Caco-2 (cell line): ENCODE measurements at regions of chr15 and their contacts with region 1.

Region 1: GRCh38 chr15:43285609-43286037 is 18.9 kb upstream of the TGM5 start:
- DNase-seq: peak; percentile 46 to 71
- H3K4me3 ChIP-seq: no peak overlapping the region
- H3K4me3 Mint-ChIP-seq: no peak overlapping the region
- H3K27ac Mint-ChIP-seq: no peak overlapping the region
- H3K4me1 ChIP-seq: no peaks in the 10 kb centered on the region
- H3K4me1 Mint-ChIP-seq: peaks cover 4% of the 10 kb centered on the region
- H3K27me3 ChIP-seq: no peaks in the 10 kb centered on the region
- H3K27me3 Mint-ChIP-seq: peaks cover 10% of the 10 kb centered on the region
- CTCF ChIP-seq: peak; percentile 64 to 79

Region 2: GRCh38 chr15:42704492-42704926 is 581.1 kb before region 1 on chr15:
- CTCF ChIA-PET with region 1: no interaction called
- POLR2A ChIA-PET with region 1: no interaction called
- intact Hi-C with region 1: loop called (anchors 5 kb)
- DNase-seq: peak; percentile 68 to 74
- H3K4me3 ChIP-seq: no peak overlapping the region
- H3K4me3 Mint-ChIP-seq: no peak overlapping the region
- H3K27ac Mint-ChIP-seq: no peak overlapping the region
- H3K4me1 ChIP-seq: no peaks in the 10 kb centered on the region
- H3K4me1 Mint-ChIP-seq: no peaks in the 10 kb centered on the region
- H3K27me3 ChIP-seq: no peaks in the 10 kb centered on the region
- H3K27me3 Mint-ChIP-seq: peaks cover 3% of the 10 kb centered on the region
- CTCF ChIP-seq: peak; percentile 81 to 89

Region 3: GRCh38 chr15:43127752-43128151 is 157.9 kb before region 1 on chr15:
- CTCF ChIA-PET with region 1: no interaction called
- POLR2A ChIA-PET with region 1: no interaction called
- intact Hi-C with region 1: no loop called
- DNase-seq: peak; percentile 40 to 58
- H3K4me3 ChIP-seq: no peak overlapping the region
- H3K4me3 Mint-ChIP-seq: peak overlapping the region; percentile 29
- H3K27ac Mint-ChIP-seq: peak overlapping the region; percentile 12
- H3K4me1 ChIP-seq: peaks cover 27% of the 10 kb centered on the region
- H3K4me1 Mint-ChIP-seq: peaks cover 29% of the 10 kb centered on the region
- H3K27me3 ChIP-seq: no peaks in the 10 kb centered on the region; the same call in 1 of the 2 replicates
- H3K27me3 Mint-ChIP-seq: no peaks in the 10 kb centered on the region
- CTCF ChIP-seq: no peak

Region 4: GRCh38 chr15:43185157-43186017 is 100.2 kb before region 1 on chr15 and contains the start of gene CCNDBP1:
- CTCF ChIA-PET with region 1: no interaction called
- POLR2A ChIA-PET with region 1: interaction called, 3 read pairs
- intact Hi-C with region 1: loop called (anchors 1 kb)
- DNase-seq: peak; percentile 96 to 97
- H3K4me3 ChIP-seq: peak within 1 kb of the TSS; percentile 82
- H3K4me3 Mint-ChIP-seq: peak within 1 kb of the TSS; percentile 93
- H3K27ac Mint-ChIP-seq: peak within 1 kb of the TSS; percentile 79
- H3K4me1 ChIP-seq: peaks cover 12% of the 10 kb centered on the region
- H3K4me1 Mint-ChIP-seq: peaks cover 4% of the 10 kb centered on the region
- H3K27me3 ChIP-seq: no peaks in the 10 kb centered on the region
- H3K27me3 Mint-ChIP-seq: no peaks in the 10 kb centered on the region
- CTCF ChIP-seq: peak; percentile 42 to 55
- total RNA-seq, gene CCNDBP1: 21.7 and 23.1 TPM in 2 replicates

Region 5: DNA sequence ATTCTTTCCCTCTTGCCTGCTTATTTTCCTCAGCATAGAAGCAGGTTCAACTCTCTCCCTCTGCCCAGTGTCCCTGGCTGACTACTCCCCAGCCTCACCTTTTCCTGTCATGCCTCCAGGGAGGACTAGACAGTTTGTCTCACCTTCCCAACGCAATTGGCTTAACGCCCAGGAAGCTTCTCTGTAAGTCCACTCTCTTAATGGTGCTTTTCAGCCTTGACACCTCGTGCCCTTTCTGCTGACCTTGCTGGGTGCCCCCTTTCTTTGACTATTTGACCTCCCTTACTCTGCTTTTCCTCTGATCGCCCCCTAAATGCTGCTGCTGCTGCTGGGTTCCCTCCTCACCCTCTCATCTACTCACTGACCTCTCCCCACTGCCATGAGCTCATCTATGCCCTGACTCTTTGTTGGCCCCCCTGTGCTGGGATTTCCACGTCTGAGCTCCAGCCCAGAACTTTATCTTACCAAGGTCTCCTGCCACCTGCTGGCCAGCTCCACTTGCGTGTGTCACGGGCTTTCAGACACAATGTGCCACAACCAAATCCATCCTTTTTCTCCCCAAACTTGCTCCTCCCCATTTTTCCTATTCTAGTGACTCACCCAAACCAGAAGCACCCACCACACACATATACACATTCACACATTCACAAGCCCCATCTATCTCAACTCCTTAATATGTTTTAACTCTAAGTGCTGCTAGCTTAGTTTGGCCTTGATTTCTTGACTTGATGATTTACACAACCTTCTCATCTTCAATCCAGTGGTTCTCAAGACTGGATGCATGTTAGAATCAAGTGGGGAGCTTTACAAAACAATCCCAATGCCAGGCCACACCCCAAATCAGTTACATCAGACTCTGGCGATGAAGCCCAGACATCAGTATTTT is 81.4 kb before region 1 on chr15:
- CTCF ChIA-PET with region 1: interaction called, 19 read pairs
- POLR2A ChIA-PET with region 1: no interaction called
- intact Hi-C with region 1: loop called (anchors 5 kb)
- DNase-seq: peak; percentile 59 to 61
- H3K4me3 ChIP-seq: no peak overlapping the region
- H3K4me3 Mint-ChIP-seq: no peak overlapping the region
- H3K27ac Mint-ChIP-seq: no peak overlapping the region
- H3K4me1 ChIP-seq: no peaks in the 10 kb centered on the region; the same call in 1 of the 2 replicates
- H3K4me1 Mint-ChIP-seq: peaks cover 7% of the 10 kb centered on the region
- H3K27me3 ChIP-seq: peaks cover 1% of the 10 kb centered on the region; the same call in 1 of the 2 replicates
- H3K27me3 Mint-ChIP-seq: peaks cover 7% of the 10 kb centered on the region
- CTCF ChIP-seq: peak; percentile 68 to 80

Region 6: GRCh38 chr15:43225201-43225949 is 60.2 kb before region 1 on chr15:
- CTCF ChIA-PET with region 1: interaction called, 59 read pairs
- POLR2A ChIA-PET with region 1: no interaction called
- intact Hi-C with region 1: loop called (anchors 1 kb)
- DNase-seq: peak; percentile 47 to 60
- H3K4me3 ChIP-seq: no peak overlapping the region
- H3K4me3 Mint-ChIP-seq: no peak overlapping the region
- H3K27ac Mint-ChIP-seq: no peak overlapping the region
- H3K4me1 ChIP-seq: no peaks in the 10 kb centered on the region
- H3K4me1 Mint-ChIP-seq: no peaks in the 10 kb centered on the region
- H3K27me3 ChIP-seq: no peaks in the 10 kb centered on the region
- H3K27me3 Mint-ChIP-seq: peaks cover 2% of the 10 kb centered on the region
- CTCF ChIP-seq: peak; percentile 52 to 77